ENCODE measurements at regions of chr5 and their contacts with region 1.

Region 1: DNA sequence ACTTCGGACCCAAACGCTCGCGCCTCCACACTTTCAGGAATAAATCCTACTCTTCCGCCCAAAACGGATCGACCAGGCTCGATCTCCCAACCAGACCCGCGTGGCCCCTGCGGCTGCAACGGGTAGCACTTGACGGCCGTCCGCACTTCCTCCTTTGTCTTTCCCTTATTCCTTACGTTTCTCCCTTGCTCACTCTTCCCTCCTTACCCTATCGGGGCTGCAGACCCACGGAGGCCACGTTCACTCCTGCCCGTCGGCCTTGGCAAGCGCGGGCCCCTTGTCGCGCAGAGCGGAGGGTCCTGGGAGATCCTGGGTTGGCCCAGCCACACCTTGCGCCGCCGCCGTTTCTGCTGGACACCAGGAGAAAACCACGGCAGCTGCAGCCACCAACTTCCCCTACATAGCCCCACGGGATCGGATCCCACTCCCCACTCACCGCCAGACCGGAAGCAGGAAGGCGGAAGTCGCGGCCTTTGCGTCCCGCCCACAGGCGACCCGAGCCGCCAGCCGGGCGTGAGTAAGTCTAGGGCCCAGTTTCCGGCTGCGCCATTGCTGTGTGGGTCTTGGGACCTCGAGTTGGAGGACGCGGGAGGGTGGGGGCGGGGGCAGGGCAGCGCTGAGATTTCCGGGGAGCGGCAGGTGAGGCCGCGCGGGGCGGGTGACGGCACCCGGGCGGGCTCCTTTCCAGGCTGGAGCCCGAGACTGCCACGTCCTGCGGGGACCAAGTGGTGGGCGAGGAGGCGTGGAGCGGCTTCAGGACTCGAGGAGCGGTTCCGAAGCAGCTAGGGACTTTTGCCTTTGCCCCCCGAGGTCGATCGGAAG is at the start of gene SMIM15:
- DNase-seq: peak; percentile 96
- H3K4me3 Mint-ChIP-seq: peak within 1 kb of the TSS; percentile 99
- H3K27ac Mint-ChIP-seq: peak within 1 kb of the TSS; percentile 99
- H3K4me1 Mint-ChIP-seq: peaks cover 32% of the 10 kb centered on the region
- H3K27me3 Mint-ChIP-seq: no peaks in the 10 kb centered on the region
- total RNA-seq, gene SMIM15: 82.9 and 92.8 TPM in 2 replicates

Region 2: GRCh38 chr5:60699530-60700382 is 462.5 kb before region 1 on chr5 and contains the start of gene DEPDC1B:
- intact Hi-C with region 1: loop called (anchors 5 kb)
- DNase-seq: peak; percentile 97
- H3K4me3 Mint-ChIP-seq: peak within 1 kb of the TSS; percentile 91
- H3K27ac Mint-ChIP-seq: peak within 1 kb of the TSS; percentile 93
- H3K4me1 Mint-ChIP-seq: peaks cover 28% of the 10 kb centered on the region
- H3K27me3 Mint-ChIP-seq: peaks cover 23% of the 10 kb centered on the region
- total RNA-seq, gene DEPDC1B: 19.8 and 20.5 TPM in 2 replicates

Region 3: DNA sequence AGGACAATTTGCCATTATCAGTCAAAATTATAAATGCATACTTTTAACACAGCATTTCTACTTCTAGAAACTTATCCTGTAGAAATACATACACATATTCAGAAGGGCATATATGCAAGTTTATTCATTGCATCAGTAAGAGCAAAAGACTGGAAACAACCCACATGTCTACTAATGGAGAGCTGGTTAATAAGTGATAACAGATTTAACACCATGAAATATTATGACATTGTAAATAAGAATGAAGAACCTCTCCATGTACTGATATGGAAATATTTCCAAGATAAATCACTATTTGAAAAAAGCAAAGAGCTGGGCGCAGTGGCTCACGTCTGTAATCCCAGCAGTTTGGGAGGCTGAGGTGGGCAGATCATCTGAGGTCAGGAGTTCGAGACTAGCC is 372.7 kb before region 1 on chr5:
- intact Hi-C with region 1: no loop called
- DNase-seq: no peak
- H3K4me3 Mint-ChIP-seq: no peak overlapping the region
- H3K27ac Mint-ChIP-seq: no peak overlapping the region
- H3K4me1 Mint-ChIP-seq: no peaks in the 10 kb centered on the region
- H3K27me3 Mint-ChIP-seq: peaks cover 9% of the 10 kb centered on the region

Region 4: GRCh38 chr5:60944904-60945812 is 217.1 kb before region 1 on chr5 and contains the starts of genes ERCC8 and NDUFAF2:
- intact Hi-C with region 1: loop called (anchors 2 kb)
- DNase-seq: peak; percentile 96
- H3K4me3 Mint-ChIP-seq: no peak within 1 kb of the TSS
- H3K27ac Mint-ChIP-seq: no peak within 1 kb of the TSS
- H3K4me1 Mint-ChIP-seq: peaks cover 16% of the 10 kb centered on the region
- H3K27me3 Mint-ChIP-seq: no peaks in the 10 kb centered on the region
- total RNA-seq, gene ERCC8: 10.7 and 10.8 TPM in 2 replicates
- total RNA-seq, gene NDUFAF2: 38.0 and 39.5 TPM in 2 replicates

Region 5: DNA sequence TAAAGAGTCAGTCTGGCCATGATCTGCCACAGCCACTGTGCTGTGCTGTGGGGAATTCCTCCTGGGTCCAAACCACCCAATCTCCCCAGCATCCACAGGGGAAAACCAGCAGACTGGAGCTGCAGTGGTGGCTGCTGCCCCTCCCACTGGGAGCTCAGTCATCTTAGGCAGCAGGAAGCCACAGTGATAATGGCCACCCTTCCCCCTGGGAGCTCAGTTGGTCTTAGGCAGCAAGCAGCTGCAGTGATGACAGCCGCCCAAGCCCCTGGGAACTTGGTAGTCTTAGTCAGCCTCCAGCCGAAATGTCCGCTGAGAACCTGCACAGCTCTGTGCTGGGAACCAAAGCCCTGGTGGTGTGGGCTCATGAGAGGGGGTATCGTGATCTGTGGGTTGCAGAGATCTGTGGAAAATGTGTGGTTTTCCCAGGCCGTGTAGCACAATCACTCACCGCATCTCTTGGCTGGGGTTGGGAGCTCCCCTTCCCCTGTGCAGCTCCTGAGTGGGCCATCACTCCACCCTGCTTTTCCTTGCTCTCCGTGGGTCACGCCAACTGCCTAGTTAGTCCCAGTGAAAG is 38.4 kb after region 1 on chr5:
- intact Hi-C with region 1: loop called (anchors 5 kb)
- DNase-seq: no peak
- H3K4me3 Mint-ChIP-seq: no peak overlapping the region
- H3K27ac Mint-ChIP-seq: no peak overlapping the region
- H3K4me1 Mint-ChIP-seq: peaks cover 6% of the 10 kb centered on the region
- H3K27me3 Mint-ChIP-seq: peaks cover 10% of the 10 kb centered on the region

Region 6: DNA sequence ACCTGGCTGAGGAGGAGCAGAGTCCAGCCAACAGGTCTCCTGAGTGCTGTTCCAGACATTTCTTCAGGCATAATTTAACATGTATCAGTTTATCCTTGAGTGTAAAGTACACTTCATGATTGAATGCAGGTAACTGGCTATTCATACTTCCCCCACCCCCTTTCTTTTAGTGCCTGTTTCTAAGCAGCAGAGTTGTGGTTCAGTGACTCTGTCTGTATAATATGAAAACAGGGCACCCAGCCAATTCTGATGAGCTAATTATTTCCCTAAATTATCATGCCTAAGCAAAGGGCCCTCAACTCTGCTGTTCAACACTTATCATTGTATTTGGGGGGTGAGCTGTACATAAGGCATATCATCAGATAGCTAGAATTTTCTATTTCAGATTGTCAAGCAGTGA is 118.0 kb after region 1 on chr5:
- intact Hi-C with region 1: loop called (anchors 5 kb)
- DNase-seq: peak; percentile 60
- H3K4me3 Mint-ChIP-seq: no peak overlapping the region
- H3K27ac Mint-ChIP-seq: no peak overlapping the region
- H3K4me1 Mint-ChIP-seq: peaks cover 24% of the 10 kb centered on the region
- H3K27me3 Mint-ChIP-seq: no peaks in the 10 kb centered on the region

Region 7: DNA sequence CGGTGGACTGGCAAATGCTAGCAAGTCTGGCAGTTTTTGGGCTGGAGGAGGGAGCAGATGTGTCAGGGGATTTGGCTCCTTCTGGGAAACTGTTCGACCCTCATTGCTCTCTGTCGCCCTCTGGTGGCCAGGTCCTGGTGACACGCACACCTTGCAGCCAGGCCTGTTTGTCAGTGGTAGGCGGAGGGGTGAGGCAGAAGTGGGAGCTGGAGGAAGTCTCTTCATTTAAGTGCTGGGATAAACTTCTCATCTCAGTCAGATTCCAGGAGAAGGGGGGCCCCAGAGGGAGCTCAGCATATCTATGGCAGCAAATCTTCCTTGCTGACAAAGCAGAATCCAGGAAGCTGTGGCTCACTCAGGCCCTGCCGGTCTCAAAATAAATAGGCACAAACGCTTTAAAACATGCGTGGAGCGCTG is 496.4 kb after region 1 on chr5:
- intact Hi-C with region 1: loop called (anchors 10 kb)
- DNase-seq: peak; percentile 93
- H3K4me3 Mint-ChIP-seq: no peak overlapping the region
- H3K27ac Mint-ChIP-seq: no peak overlapping the region
- H3K4me1 Mint-ChIP-seq: no peaks in the 10 kb centered on the region
- H3K27me3 Mint-ChIP-seq: peaks cover 4% of the 10 kb centered on the region